Activated naive CD4-positive, alpha-beta T cell treated with anti-CD3 and anti-CD28 coated beads for 36 hours (primary cell): ENCODE measurements at regions of chr2 and their contacts with region 1.

Region 1: GRCh38 chr2:157363612-157364101 is 38.0 kb upstream of the ERMN start:
- DNase-seq: no peak
- H3K4me3 Mint-ChIP-seq: peak overlapping the region; percentile 3
- H3K27ac Mint-ChIP-seq: peak overlapping the region; percentile 65
- H3K4me1 Mint-ChIP-seq: peaks cover 36% of the 10 kb centered on the region
- H3K27me3 Mint-ChIP-seq: no peaks in the 10 kb centered on the region

Region 2: DNA sequence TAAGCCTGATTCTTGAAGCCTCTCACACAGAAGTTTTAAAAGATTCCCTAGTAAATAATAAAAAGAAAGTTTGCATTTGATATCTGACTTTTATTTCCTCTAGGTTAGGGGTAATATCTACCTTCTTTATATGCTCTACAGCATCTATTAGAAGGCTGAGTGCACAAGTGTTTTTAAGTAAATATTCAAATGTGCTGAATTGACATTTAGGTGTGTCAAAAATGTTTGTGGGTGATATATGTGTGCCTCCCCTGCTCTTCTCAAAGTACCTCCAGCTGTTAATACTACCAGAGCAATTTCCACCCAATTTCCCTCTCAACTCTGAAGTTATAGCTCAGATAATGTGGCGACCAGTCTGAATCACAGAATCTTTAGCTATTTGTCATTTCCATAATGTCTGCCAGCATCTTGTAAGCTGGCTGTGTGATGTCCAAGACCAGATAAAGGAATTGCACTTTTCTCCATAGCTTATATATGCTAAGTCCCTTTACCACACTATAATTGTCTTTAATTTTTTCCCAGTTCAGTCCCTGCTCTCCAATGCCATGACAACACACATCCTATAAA is 13.6 kb before region 1 on chr2:
- CTCF ChIA-PET with region 1: interaction called, 5 read pairs
- intact Hi-C with region 1: loop called (anchors 2 kb)
- DNase-seq: no peak
- H3K4me3 Mint-ChIP-seq: no peak overlapping the region
- H3K27ac Mint-ChIP-seq: no peak overlapping the region
- H3K4me1 Mint-ChIP-seq: peaks cover 49% of the 10 kb centered on the region
- H3K27me3 Mint-ChIP-seq: no peaks in the 10 kb centered on the region

Region 3: DNA sequence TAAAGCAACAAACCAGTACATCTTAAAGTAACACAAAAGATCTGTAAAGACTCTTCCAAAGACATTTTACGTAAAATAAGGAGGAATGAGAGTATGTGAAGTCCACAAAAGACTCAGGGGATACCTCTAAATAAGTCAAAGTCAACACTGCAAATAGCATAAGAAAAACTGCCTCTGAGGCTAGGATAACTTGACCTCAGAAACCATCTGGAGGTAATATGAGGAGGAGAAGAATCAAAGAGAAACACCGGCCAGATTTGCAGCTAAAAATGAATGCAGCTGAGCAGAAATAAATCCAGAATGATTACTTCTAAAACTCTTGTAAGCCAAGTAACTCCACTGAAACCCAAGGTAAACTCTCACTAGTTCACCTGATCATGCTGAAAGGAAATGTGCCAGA is 14.2 kb after region 1 on chr2:
- CTCF ChIA-PET with region 1: no interaction called
- intact Hi-C with region 1: loop called (anchors 1 kb)
- DNase-seq: no peak
- H3K4me3 Mint-ChIP-seq: no peak overlapping the region
- H3K27ac Mint-ChIP-seq: no peak overlapping the region
- H3K4me1 Mint-ChIP-seq: peaks cover 35% of the 10 kb centered on the region
- H3K27me3 Mint-ChIP-seq: no peaks in the 10 kb centered on the region

Region 4: DNA sequence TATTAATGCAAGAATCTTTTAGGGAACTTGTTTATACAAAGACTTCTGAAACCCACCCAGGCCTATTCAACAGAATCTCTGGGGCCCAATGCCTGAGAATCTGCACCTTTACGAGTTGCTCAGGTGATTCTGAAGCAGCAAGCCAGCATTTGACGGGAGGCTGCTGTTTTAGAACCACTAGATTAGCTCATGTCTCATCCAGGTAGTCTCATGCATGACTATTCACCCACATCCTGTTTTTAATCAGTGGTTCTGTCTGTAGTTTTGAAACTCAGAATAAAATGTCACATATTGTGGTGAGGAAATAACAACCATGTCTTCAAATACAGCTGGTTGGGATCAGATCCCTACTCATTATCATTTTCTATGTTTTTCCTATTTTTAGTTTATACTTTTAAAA is 40.7 kb after region 1 on chr2:
- CTCF ChIA-PET with region 1: interaction called, 3 read pairs
- intact Hi-C with region 1: loop called (anchors 2 kb)
- DNase-seq: peak; percentile 80
- H3K4me3 Mint-ChIP-seq: no peak overlapping the region
- H3K27ac Mint-ChIP-seq: peak overlapping the region; percentile 72
- H3K4me1 Mint-ChIP-seq: peaks cover 76% of the 10 kb centered on the region
- H3K27me3 Mint-ChIP-seq: no peaks in the 10 kb centered on the region

Region 5: GRCh38 chr2:157415591-157416101 is 52.0 kb after region 1 on chr2:
- CTCF ChIA-PET with region 1: no interaction called
- intact Hi-C with region 1: no loop called
- DNase-seq: peak; percentile 33
- H3K4me3 Mint-ChIP-seq: peak overlapping the region; percentile 58
- H3K27ac Mint-ChIP-seq: peak overlapping the region; percentile 99
- H3K4me1 Mint-ChIP-seq: peaks cover 91% of the 10 kb centered on the region
- H3K27me3 Mint-ChIP-seq: no peaks in the 10 kb centered on the region